ENCODE measurements at regions of chr13 and their contacts with region 1.

Region 1: GRCh38 chr13:84896128-84896527 is 903.1 kb downstream of the SLITRK6 start:
- DNase-seq: peak in 4 of 9 donors; percentile 9 to 26 (median 18)
- ATAC-seq: no peak
- H3K4me3 ChIP-seq: no peak overlapping the region
- H3K4me3 Mint-ChIP-seq: no peak overlapping the region
- H3K27ac ChIP-seq: no peak overlapping the region
- H3K27ac Mint-ChIP-seq: no peak overlapping the region
- H3K4me1 ChIP-seq: no peaks in the 10 kb centered on the region
- H3K4me1 Mint-ChIP-seq: no peaks in the 10 kb centered on the region
- H3K27me3 ChIP-seq: no peaks in the 10 kb centered on the region
- H3K27me3 Mint-ChIP-seq: no peaks in the 10 kb centered on the region

Region 2: GRCh38 chr13:85806553-85807175 is 910.5 kb after region 1 on chr13:
- CTCF ChIA-PET with region 1: interaction called, 4 read pairs
- POLR2A ChIA-PET with region 1: no interaction called
- intact Hi-C with region 1: loop called (anchors 1 kb)
- DNase-seq: peak in 4 of 9 donors; percentile 4 to 27 (median 8)
- ATAC-seq: no peak
- H3K4me3 ChIP-seq: no peak overlapping the region
- H3K4me3 Mint-ChIP-seq: no peak overlapping the region
- H3K27ac ChIP-seq: no peak overlapping the region
- H3K27ac Mint-ChIP-seq: no peak overlapping the region
- H3K4me1 ChIP-seq: no peaks in the 10 kb centered on the region
- H3K4me1 Mint-ChIP-seq: no peaks in the 10 kb centered on the region
- H3K27me3 ChIP-seq: no peaks in the 10 kb centered on the region
- H3K27me3 Mint-ChIP-seq: no peaks in the 10 kb centered on the region

Region 3: GRCh38 chr13:85828149-85828548 is 932.0 kb after region 1 on chr13:
- CTCF ChIA-PET with region 1: no interaction called
- POLR2A ChIA-PET with region 1: no interaction called
- intact Hi-C with region 1: loop called in 1 of 2 experiments (anchors 1 kb)
- DNase-seq: no peak
- ATAC-seq: no peak
- H3K4me3 ChIP-seq: no peak overlapping the region
- H3K4me3 Mint-ChIP-seq: no peak overlapping the region
- H3K27ac ChIP-seq: no peak overlapping the region
- H3K27ac Mint-ChIP-seq: no peak overlapping the region
- H3K4me1 ChIP-seq: no peaks in the 10 kb centered on the region
- H3K4me1 Mint-ChIP-seq: no peaks in the 10 kb centered on the region
- H3K27me3 ChIP-seq: no peaks in the 10 kb centered on the region
- H3K27me3 Mint-ChIP-seq: no peaks in the 10 kb centered on the region

Measured in naive thymus-derived CD4-positive, alpha-beta T cell (primary cell).